Naive thymus-derived CD8-positive, alpha-beta T cell (primary cell): ENCODE measurements at regions of chr19 and their contacts with region 1.

Region 1: GRCh38 chr19:58519355-58520256 is at the start of gene ZBTB45:
- DNase-seq: peak; percentile 81 to 92 (median 89)
- ATAC-seq: peak; percentile 82
- H3K4me3 Mint-ChIP-seq: peak within 1 kb of the TSS; percentile 92 to 98 (median 96)
- H3K27ac Mint-ChIP-seq: peak within 1 kb of the TSS; percentile 95 to 98 (median 98)
- H3K4me1 Mint-ChIP-seq: peaks cover 28 to 45% (median 42%) of the 10 kb centered on the region in 4 donors
- H3K27me3 Mint-ChIP-seq: no peaks in the 10 kb centered on the region
- polyA plus RNA-seq, gene ZBTB45: 2.8 to 5.3 (median 3.5) TPM

Region 2: DNA sequence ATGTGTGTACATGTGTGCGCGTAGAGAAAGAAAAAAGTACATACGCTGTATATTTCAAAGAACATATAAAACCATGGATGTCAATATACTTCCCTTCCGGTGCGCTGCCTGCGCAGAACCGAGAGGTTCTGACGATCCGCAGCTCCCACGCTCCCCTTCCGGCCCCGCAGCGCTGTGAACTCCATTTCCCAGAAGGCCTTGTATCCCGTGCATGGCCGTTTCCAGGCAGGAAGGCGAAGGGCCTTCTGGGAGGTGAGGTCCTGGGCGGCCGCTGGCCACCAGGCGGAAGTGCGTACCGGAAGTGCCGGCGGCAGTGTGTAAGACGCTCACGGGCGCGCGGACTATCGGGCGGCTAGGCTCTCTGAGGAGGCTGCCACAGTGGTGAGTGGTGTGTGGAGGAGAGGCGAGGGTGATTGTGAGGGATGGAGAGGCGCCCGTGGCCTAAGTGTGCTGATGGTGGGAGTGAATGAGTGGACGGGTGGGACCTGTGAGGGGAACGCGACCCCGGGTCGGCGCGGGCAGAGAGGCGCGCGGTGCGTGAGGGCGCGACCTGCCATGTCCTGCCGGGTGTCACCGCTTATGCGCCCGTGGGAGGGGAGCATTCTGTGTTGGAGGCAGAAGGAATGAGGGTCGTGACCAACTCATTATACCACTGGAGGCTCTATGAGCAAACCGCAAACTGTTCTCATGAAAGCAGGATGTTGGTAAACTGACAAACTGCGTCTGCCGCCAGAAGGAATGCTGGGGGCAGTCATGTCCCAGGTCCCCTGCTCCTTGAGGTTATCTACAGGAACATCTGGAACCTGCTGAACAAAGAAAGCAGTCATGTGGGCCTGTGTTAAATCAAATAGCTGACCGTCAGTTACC is 214.3 kb before region 1 on chr19 and contains the start of gene ERVK3-1:
- POLR2A ChIA-PET with region 1: interaction called, 11 read pairs
- DNase-seq: peak; percentile 84 to 98 (median 94)
- ATAC-seq: peak; percentile 94 to 95
- H3K4me3 Mint-ChIP-seq: peak within 1 kb of the TSS; percentile 95 to 100 (median 100)
- H3K27ac Mint-ChIP-seq: peak within 1 kb of the TSS; percentile 99 to 100 (median 100)
- H3K4me1 Mint-ChIP-seq: peaks cover 19 to 63% (median 54%) of the 10 kb centered on the region in 4 donors
- H3K27me3 Mint-ChIP-seq: no peaks in the 10 kb centered on the region
- polyA plus RNA-seq, gene ERVK3-1: 55.1 to 80.9 (median 72.0) TPM

Region 3: GRCh38 chr19:58386576-58387337 is 132.8 kb before region 1 on chr19 and contains the start of gene RPS5:
- POLR2A ChIA-PET with region 1: no interaction called
- DNase-seq: peak; percentile 87 to 99 (median 96)
- ATAC-seq: peak; percentile 89 to 90
- H3K4me3 Mint-ChIP-seq: peak within 1 kb of the TSS; percentile 92 to 99 (median 95)
- H3K27ac Mint-ChIP-seq: peak within 1 kb of the TSS; percentile 97 to 100 (median 98)
- H3K4me1 Mint-ChIP-seq: peaks cover 14 to 58% (median 54%) of the 10 kb centered on the region in 4 donors
- H3K27me3 Mint-ChIP-seq: peaks cover 0 to 2% (median 0%) of the 10 kb centered on the region in 5 donors
- polyA plus RNA-seq, gene RPS5: 1,899 to 2,106 (median 2,080) TPM

Region 4: GRCh38 chr19:58538257-58539168 is 18.9 kb after region 1 on chr19:
- POLR2A ChIA-PET with region 1: interaction called, 94 read pairs
- DNase-seq: peak in 7 of 10 donors; percentile 25 to 53 (median 46)
- ATAC-seq: peak; percentile 85 to 88
- H3K4me3 Mint-ChIP-seq: peak overlapping the region; percentile 70 to 85 (median 74)
- H3K27ac Mint-ChIP-seq: peak overlapping the region; percentile 38 to 86 (median 78)
- H3K4me1 Mint-ChIP-seq: peaks cover 6 to 16% (median 10%) of the 10 kb centered on the region in 4 donors
- H3K27me3 Mint-ChIP-seq: peaks cover 0 to 11% (median 0%) of the 10 kb centered on the region in 5 donors

Region 5: DNA sequence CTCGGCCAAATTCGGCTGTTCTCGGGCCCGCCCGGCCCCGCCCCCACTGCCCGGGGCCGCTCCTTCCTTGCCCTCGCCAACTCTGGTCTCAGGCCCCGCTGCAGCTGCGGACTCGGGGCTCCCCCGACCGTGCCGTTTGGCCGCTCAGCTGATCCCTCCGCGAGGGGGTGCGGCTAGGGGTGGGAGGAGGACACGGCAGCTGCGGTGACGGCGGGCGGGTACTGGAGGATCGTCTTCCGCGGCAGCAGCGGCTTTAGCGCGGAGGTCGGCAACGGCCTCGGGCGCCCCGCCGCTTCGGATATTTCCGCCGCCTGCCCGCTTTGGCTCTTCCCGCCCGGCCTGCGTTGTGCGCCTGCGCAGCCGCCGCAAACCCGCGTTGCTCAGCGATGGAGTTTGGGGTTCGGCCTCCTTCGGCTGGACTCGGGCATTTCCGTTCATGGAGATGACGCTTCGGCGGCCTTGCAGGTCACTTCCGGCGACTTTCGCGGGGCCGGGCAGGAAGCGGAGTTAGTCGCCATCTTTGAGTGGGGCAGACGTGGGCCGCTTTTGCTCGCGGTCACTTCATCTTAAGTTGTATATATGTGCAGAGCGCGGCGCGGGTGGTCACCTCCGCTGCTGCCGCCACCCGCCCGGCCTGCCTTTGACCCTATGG is 39.1 kb after region 1 on chr19:
- POLR2A ChIA-PET with region 1: interaction called, 91 read pairs
- DNase-seq: peak; percentile 99 to 100 (median 100)
- ATAC-seq: peak; percentile 68 to 72
- H3K4me3 Mint-ChIP-seq: peak overlapping the region; percentile 94 to 99 (median 97)
- H3K27ac Mint-ChIP-seq: peak overlapping the region; percentile 93 to 100 (median 98)
- H3K4me1 Mint-ChIP-seq: peaks cover 33 to 81% (median 80%) of the 10 kb centered on the region in 4 donors
- H3K27me3 Mint-ChIP-seq: peaks cover 0 to 2% (median 0%) of the 10 kb centered on the region in 5 donors

Region 6: GRCh38 chr19:58581227-58582151 is 61.9 kb after region 1 on chr19:
- POLR2A ChIA-PET with region 1: interaction called, 73 read pairs
- DNase-seq: peak; percentile 81 to 94 (median 88)
- ATAC-seq: peak; percentile 98
- H3K4me3 Mint-ChIP-seq: peak overlapping the region in 2 of 10 donors; percentile 8 to 22
- H3K27ac Mint-ChIP-seq: peak overlapping the region in 9 of 10 donors; percentile 65 to 93 (median 87)
- H3K4me1 Mint-ChIP-seq: peaks cover 15 to 26% (median 22%) of the 10 kb centered on the region in 4 donors
- H3K27me3 Mint-ChIP-seq: no peaks in the 10 kb centered on the region